T-cell (primary cell): ENCODE measurements at regions of chr7 and their contacts with region 1.

Region 1: GRCh38 chr7:85587785-85588184 is 400.9 kb upstream of the SEMA3D start:
- DNase-seq: no peak
- ATAC-seq: no peak
- H3K4me3 ChIP-seq: no peak overlapping the region
- H3K4me3 Mint-ChIP-seq: no peak overlapping the region
- H3K27ac ChIP-seq: no peak overlapping the region
- H3K27ac Mint-ChIP-seq: no peak overlapping the region
- H3K4me1 ChIP-seq: no peaks in the 10 kb centered on the region
- H3K4me1 Mint-ChIP-seq: no peaks in the 10 kb centered on the region
- H3K27me3 ChIP-seq: no peaks in the 10 kb centered on the region
- H3K27me3 Mint-ChIP-seq: no peaks in the 10 kb centered on the region

Region 2: GRCh38 chr7:85830982-85831381 is 243.2 kb after region 1 on chr7:
- CTCF ChIA-PET with region 1: interaction called in 1 of 2 experiments, 10 read pairs
- POLR2A ChIA-PET with region 1: no interaction called
- DNase-seq: no peak
- ATAC-seq: no peak
- H3K4me3 ChIP-seq: no peak overlapping the region
- H3K4me3 Mint-ChIP-seq: no peak overlapping the region
- H3K27ac ChIP-seq: no peak overlapping the region
- H3K27ac Mint-ChIP-seq: no peak overlapping the region
- H3K4me1 ChIP-seq: no peaks in the 10 kb centered on the region
- H3K4me1 Mint-ChIP-seq: no peaks in the 10 kb centered on the region
- H3K27me3 ChIP-seq: no peaks in the 10 kb centered on the region
- H3K27me3 Mint-ChIP-seq: no peaks in the 10 kb centered on the region